AG04450 (cell line): ENCODE measurements at regions of chr2 and their contacts with region 1.

Region 1: GRCh38 chr2:1550658-1551316 is 137.5 kb downstream of the TPO start:
- DNase-seq: no peak
- H3K4me3 ChIP-seq: no peak overlapping the region
- H3K27ac ChIP-seq: no peak overlapping the region
- H3K27me3 ChIP-seq: peaks cover 4% of the 10 kb centered on the region
- CTCF ChIP-seq: peak; percentile 87

Region 2: GRCh38 chr2:714005-714741 is 836.6 kb before region 1 on chr2:
- CTCF ChIA-PET with region 1: interaction called, 47 read pairs
- POLR2A ChIA-PET with region 1: no interaction called
- DNase-seq: peak; percentile 10
- H3K4me3 ChIP-seq: no peak overlapping the region
- H3K27ac ChIP-seq: no peak overlapping the region
- H3K27me3 ChIP-seq: no peaks in the 10 kb centered on the region
- CTCF ChIP-seq: peak; percentile 81

Region 3: DNA sequence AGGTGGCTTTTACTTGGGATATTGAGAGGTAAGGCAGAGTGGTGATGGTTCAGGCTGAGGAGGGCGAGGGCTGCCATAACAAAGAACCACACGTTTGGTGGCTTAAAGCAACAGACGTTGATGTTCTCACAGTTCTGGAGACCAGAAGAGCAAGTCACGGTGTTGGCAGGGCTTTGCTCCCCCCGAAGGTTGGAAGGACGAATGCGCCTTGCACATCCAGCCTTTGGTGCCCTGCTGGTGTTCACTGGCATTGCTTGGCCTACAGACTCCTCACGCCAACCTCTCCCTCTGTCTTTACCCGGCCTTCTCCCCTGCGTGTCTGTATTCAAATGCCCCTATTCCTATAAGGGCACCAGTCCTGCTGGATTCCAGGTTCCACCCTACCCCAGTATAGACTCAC is 12.1 kb before region 1 on chr2:
- CTCF ChIA-PET with region 1: interaction called, 30 read pairs
- POLR2A ChIA-PET with region 1: no interaction called
- DNase-seq: no peak
- H3K4me3 ChIP-seq: no peak overlapping the region
- H3K27ac ChIP-seq: no peak overlapping the region
- H3K27me3 ChIP-seq: no peaks in the 10 kb centered on the region
- CTCF ChIP-seq: peak; percentile 48

Region 4: DNA sequence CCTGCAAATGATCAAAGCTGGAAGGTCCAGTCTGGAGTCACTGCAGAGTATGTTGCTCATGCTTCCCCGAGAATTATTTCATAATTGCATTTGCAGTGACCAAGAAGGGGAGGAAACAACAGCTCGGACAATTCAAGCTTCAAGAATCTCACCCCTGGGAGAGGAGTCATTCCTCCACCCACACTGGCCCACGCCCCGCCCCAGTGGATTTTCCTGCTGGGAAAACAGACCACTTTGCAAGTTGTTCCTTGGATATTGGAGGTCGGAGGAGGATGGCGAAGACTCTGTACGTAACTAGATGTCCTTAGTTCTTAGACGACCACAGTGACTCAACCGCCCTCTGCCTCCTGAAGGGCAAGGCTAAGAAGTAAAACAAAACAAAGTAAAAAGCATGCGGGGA is 21.9 kb after region 1 on chr2:
- CTCF ChIA-PET with region 1: interaction called, 27 read pairs
- POLR2A ChIA-PET with region 1: no interaction called
- DNase-seq: no peak
- H3K4me3 ChIP-seq: no peak overlapping the region
- H3K27ac ChIP-seq: no peak overlapping the region
- H3K27me3 ChIP-seq: no peaks in the 10 kb centered on the region
- CTCF ChIP-seq: no peak

Region 5: GRCh38 chr2:1791685-1792435 is 241.1 kb after region 1 on chr2:
- CTCF ChIA-PET with region 1: interaction called, 13 read pairs
- POLR2A ChIA-PET with region 1: interaction called, 6 read pairs
- DNase-seq: peak; percentile 71
- H3K4me3 ChIP-seq: no peak overlapping the region
- H3K27ac ChIP-seq: peak overlapping the region; percentile 82
- H3K27me3 ChIP-seq: no peaks in the 10 kb centered on the region
- CTCF ChIP-seq: 0 out of 2 replicates have a peak, but pooled peaks have one; percentile 9